ENCODE measurements at regions of chr21 and their contacts with region 1.

Region 1: GRCh38 chr21:14712121-14712723 is 166.1 kb upstream of the SAMSN1 start:
- DNase-seq: no peak
- H3K4me3 ChIP-seq: no peak overlapping the region
- H3K4me3 Mint-ChIP-seq: no peak overlapping the region
- H3K27ac ChIP-seq: no peak overlapping the region
- H3K27ac Mint-ChIP-seq: no peak overlapping the region
- H3K4me1 ChIP-seq: no peaks in the 10 kb centered on the region
- H3K4me1 Mint-ChIP-seq: no peaks in the 10 kb centered on the region
- H3K27me3 ChIP-seq: no peaks in the 10 kb centered on the region
- H3K27me3 Mint-ChIP-seq: no peaks in the 10 kb centered on the region
- CTCF ChIP-seq: no peak

Region 2: DNA sequence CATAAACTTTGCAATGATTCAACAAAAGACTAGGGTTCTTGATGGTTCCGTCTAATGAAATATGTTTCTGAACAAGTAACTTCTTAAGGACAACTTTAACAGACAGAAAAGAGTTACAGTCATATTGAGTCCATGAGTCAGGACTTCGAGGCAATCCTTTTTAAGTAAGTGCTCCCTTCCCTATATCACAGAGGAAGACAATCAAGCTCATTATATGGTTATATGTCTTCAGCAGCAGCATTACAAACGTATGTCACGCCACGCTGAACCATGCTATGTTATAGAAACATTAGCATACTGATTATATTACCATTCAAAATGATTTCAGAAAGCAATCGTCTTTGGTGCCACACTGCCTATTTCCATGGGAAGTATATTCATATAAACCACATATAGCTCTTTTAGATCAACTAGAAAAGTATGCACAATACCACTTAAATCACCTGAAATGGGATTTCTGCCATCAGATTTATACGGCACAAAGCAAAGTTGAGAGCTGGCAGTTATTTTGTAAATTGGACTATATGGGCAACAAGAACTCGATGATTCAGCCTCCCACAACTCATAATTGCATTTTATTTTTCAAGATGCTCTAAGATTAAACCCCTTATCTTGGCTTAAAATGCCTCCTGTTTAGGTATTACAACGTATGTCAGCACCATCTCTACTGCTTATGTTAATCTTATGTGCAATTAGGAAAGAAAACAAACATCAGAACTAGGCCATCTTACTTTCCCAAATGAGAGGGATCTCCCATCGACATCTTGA is 54.8 kb before region 1 on chr21:
- intact Hi-C with region 1: loop called in 1 of 2 experiments (anchors 10 kb)
- DNase-seq: no peak
- H3K4me3 ChIP-seq: no peak overlapping the region
- H3K4me3 Mint-ChIP-seq: no peak overlapping the region
- H3K27ac ChIP-seq: no peak overlapping the region
- H3K27ac Mint-ChIP-seq: no peak overlapping the region
- H3K4me1 ChIP-seq: no peaks in the 10 kb centered on the region
- H3K4me1 Mint-ChIP-seq: no peaks in the 10 kb centered on the region
- H3K27me3 ChIP-seq: no peaks in the 10 kb centered on the region
- H3K27me3 Mint-ChIP-seq: no peaks in the 10 kb centered on the region
- CTCF ChIP-seq: no peak

Region 3: GRCh38 chr21:14923468-14923867 is 211.2 kb after region 1 on chr21:
- intact Hi-C with region 1: no loop called
- DNase-seq: no peak
- H3K4me3 ChIP-seq: no peak overlapping the region
- H3K4me3 Mint-ChIP-seq: no peak overlapping the region
- H3K27ac ChIP-seq: no peak overlapping the region
- H3K27ac Mint-ChIP-seq: no peak overlapping the region
- H3K4me1 ChIP-seq: no peaks in the 10 kb centered on the region
- H3K4me1 Mint-ChIP-seq: no peaks in the 10 kb centered on the region
- H3K27me3 ChIP-seq: no peaks in the 10 kb centered on the region
- H3K27me3 Mint-ChIP-seq: no peaks in the 10 kb centered on the region
- CTCF ChIP-seq: no peak

Region 4: GRCh38 chr21:16058896-16059295 is 1346.7 kb after region 1 on chr21:
- intact Hi-C with region 1: no loop called
- DNase-seq: no peak
- H3K4me3 ChIP-seq: no peak overlapping the region
- H3K4me3 Mint-ChIP-seq: no peak overlapping the region
- H3K27ac ChIP-seq: no peak overlapping the region
- H3K27ac Mint-ChIP-seq: no peak overlapping the region
- H3K4me1 ChIP-seq: no peaks in the 10 kb centered on the region
- H3K4me1 Mint-ChIP-seq: no peaks in the 10 kb centered on the region
- H3K27me3 ChIP-seq: no peaks in the 10 kb centered on the region
- H3K27me3 Mint-ChIP-seq: no peaks in the 10 kb centered on the region
- CTCF ChIP-seq: no peak

Measured in CD14-positive monocyte (primary cell).